ENCODE measurements at regions of chr5 and their contacts with region 1.

Region 1: GRCh38 chr5:38809388-38810359 is 36.1 kb upstream of the OSMR start:
- DNase-seq: peak; percentile 87
- H3K4me3 ChIP-seq: no peak overlapping the region
- H3K27ac ChIP-seq: no peak overlapping the region
- H3K4me1 ChIP-seq: peaks cover 31% of the 10 kb centered on the region
- H3K27me3 ChIP-seq: no peaks in the 10 kb centered on the region
- CTCF ChIP-seq: peak; percentile 81 to 83
- POLR2A ChIP-seq: no peak

Region 2: GRCh38 chr5:38208782-38209378 is 600.8 kb before region 1 on chr5:
- CTCF ChIA-PET with region 1: interaction called, 16 read pairs
- POLR2A ChIA-PET with region 1: no interaction called
- dilution Hi-C with region 1: no loop called
- intact Hi-C with region 1: no loop called
- DNase-seq: peak; percentile 22
- H3K4me3 ChIP-seq: no peak overlapping the region
- H3K27ac ChIP-seq: no peak overlapping the region
- H3K4me1 ChIP-seq: no peaks in the 10 kb centered on the region
- H3K27me3 ChIP-seq: no peaks in the 10 kb centered on the region
- CTCF ChIP-seq: peak; percentile 21 to 33
- POLR2A ChIP-seq: no peak

Region 3: DNA sequence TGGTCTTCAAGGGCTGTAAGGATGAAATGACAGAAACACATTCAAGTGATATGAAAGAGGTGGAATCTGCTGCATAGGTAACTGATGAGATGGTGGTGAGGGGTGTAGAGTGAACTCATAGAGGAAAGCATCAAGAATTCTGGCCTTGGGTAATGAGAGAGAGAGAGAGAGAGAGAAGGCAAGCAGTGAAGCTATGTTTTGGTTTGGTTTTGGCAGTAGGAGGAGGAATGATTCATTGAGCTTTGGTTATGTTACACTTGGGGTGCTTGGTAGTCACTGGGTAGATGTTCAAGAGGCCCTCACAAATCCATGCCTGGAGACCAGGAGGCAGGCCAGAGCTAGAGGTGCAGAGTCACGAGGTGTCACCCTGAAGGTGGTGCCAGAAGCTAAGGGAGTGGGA is 461.8 kb before region 1 on chr5:
- CTCF ChIA-PET with region 1: no interaction called
- POLR2A ChIA-PET with region 1: no interaction called
- dilution Hi-C with region 1: no loop called
- intact Hi-C with region 1: no loop called
- DNase-seq: no peak
- H3K4me3 ChIP-seq: no peak overlapping the region
- H3K27ac ChIP-seq: no peak overlapping the region
- H3K4me1 ChIP-seq: no peaks in the 10 kb centered on the region
- H3K27me3 ChIP-seq: peaks cover 0 to 2% of the 10 kb centered on the region in 2 experiments
- CTCF ChIP-seq: no peak
- POLR2A ChIP-seq: no peak

Region 4: DNA sequence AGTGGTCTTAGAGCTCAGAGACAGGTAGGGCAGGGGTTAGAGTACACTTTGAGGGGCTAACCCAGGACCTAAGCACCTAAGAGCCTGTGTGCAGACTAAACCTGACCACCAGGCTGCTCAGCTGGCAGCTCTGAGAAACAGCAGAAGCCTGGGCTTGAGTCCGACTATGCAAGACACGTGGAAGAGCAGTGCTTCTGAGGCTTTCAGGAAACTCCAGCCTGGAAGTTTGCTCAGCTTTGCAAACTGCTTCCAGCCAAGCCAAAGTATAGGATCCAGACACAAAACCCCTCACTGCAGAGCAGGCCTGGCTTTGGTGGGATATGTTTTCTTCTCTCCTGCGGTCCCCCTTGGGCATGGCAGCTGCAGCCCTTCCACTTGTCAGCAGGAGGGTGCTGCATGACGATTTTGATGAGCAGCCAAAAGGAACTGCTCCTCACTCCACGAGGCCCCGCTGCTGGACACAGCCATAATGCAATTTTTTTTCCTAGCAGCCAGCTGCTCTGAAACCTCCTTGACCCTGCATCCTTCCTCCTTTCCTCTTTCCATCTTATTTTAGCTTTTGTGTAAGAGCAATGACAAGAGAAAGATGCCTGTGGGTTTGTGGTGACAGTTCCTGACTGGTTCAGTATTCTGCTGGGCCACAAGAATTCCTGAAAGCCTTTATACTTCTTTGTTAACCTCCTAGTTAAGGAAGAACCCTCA is 376.4 kb before region 1 on chr5:
- CTCF ChIA-PET with region 1: interaction called, 25 read pairs
- POLR2A ChIA-PET with region 1: no interaction called
- dilution Hi-C with region 1: loop called (anchors 25 kb)
- intact Hi-C with region 1: no loop called
- DNase-seq: peak; percentile 90
- H3K4me3 ChIP-seq: no peak overlapping the region
- H3K27ac ChIP-seq: peak overlapping the region; percentile 58
- H3K4me1 ChIP-seq: peaks cover 19% of the 10 kb centered on the region
- H3K27me3 ChIP-seq: no peaks in the 10 kb centered on the region
- CTCF ChIP-seq: peak in 1 of 2 donors; percentile 11
- POLR2A ChIP-seq: no peak

Region 5: GRCh38 chr5:38540314-38540713 is 269.4 kb before region 1 on chr5:
- CTCF ChIA-PET with region 1: interaction called, 10 read pairs
- POLR2A ChIA-PET with region 1: no interaction called
- dilution Hi-C with region 1: no loop called
- intact Hi-C with region 1: no loop called
- DNase-seq: peak; percentile 12
- H3K4me3 ChIP-seq: no peak overlapping the region
- H3K27ac ChIP-seq: no peak overlapping the region
- H3K4me1 ChIP-seq: no peaks in the 10 kb centered on the region
- H3K27me3 ChIP-seq: no peaks in the 10 kb centered on the region
- CTCF ChIP-seq: no peak
- POLR2A ChIP-seq: no peak

Region 6: GRCh38 chr5:38650946-38651345 is 158.7 kb before region 1 on chr5:
- CTCF ChIA-PET with region 1: interaction called, 11 read pairs
- POLR2A ChIA-PET with region 1: no interaction called
- dilution Hi-C with region 1: no loop called
- intact Hi-C with region 1: loop called (anchors 1 kb)
- DNase-seq: peak; percentile 92
- H3K4me3 ChIP-seq: peak overlapping the region in 1 of 3 experiments; percentile 28
- H3K27ac ChIP-seq: peak overlapping the region; percentile 44
- H3K4me1 ChIP-seq: peaks cover 12% of the 10 kb centered on the region
- H3K27me3 ChIP-seq: peaks cover 0 to 2% of the 10 kb centered on the region in 2 experiments
- CTCF ChIP-seq: no peak
- POLR2A ChIP-seq: no peak

Region 7: DNA sequence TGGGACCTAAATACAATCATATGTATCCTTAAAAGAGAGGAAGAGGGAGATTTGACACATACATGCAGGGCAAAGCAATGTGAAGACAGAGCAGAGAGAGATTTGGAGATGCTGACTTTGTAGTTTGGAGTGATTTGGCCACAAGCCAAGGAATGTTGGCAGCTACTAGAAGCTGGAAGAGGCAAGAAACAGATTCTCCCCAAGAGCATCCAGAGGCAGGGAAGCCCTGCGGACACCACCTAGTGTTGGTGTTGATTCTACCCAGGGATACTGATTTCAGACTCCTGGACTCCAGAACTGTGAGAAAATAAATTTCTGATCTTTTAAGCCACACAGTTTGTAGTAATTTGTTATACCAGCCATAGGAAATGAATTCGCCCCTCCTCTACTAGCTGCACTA is 28.7 kb before region 1 on chr5:
- CTCF ChIA-PET with region 1: interaction called, 96 read pairs
- POLR2A ChIA-PET with region 1: interaction called, 3 read pairs
- dilution Hi-C with region 1: no loop called
- intact Hi-C with region 1: loop called (anchors 1 kb)
- DNase-seq: peak; percentile 62
- H3K4me3 ChIP-seq: no peak overlapping the region
- H3K27ac ChIP-seq: no peak overlapping the region
- H3K4me1 ChIP-seq: peaks cover 29% of the 10 kb centered on the region
- H3K27me3 ChIP-seq: peaks cover 0 to 8% of the 10 kb centered on the region in 2 experiments
- CTCF ChIP-seq: peak in 1 of 2 donors; percentile 10
- POLR2A ChIP-seq: no peak